PC-9 (cell line): ENCODE measurements at regions of chr15 and their contacts with region 1.

Region 1: DNA sequence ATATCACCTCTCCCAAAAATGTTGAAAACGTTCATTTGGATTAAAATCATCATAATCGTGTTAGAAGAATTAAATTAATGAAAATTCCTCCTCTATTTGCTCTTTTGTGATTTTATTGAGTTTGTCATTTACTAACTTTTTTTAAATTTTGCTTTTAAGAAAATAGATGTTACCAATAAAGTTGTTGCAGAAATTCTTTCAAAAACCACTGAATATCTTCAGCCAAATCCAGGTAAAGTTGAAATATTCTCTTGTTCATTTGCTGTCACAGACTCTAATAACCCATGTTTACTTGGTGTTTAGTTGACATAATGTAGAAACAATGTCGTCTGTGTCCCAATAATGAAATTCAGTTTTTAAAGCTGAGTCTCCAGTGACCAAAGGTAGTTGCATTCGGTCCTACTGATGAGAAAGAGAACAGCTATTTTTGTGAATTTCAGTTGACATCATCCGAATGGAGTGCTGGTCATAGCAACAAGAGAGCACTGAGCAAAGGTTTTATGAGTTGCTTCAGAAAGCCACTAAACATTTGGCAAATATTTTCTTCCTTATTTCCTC is 88.9 kb upstream of the ADAMTSL3 start:
- DNase-seq: peak in 1 of 2 experiments; percentile 37
- H3K4me3 ChIP-seq: no peak overlapping the region
- H3K27ac ChIP-seq: no peak overlapping the region
- H3K4me1 ChIP-seq: no peaks in the 10 kb centered on the region
- H3K27me3 ChIP-seq: no peaks in the 10 kb centered on the region
- CTCF ChIP-seq: no peak

Region 2: GRCh38 chr15:84023636-84024035 is 458.6 kb after region 1 on chr15:
- CTCF ChIA-PET with region 1: no interaction called
- POLR2A ChIA-PET with region 1: no interaction called
- intact Hi-C with region 1: loop called (anchors 2 kb)
- DNase-seq: peak in 1 of 2 experiments; percentile 6
- H3K4me3 ChIP-seq: no peak overlapping the region
- H3K27ac ChIP-seq: no peak overlapping the region
- H3K4me1 ChIP-seq: no peaks in the 10 kb centered on the region
- H3K27me3 ChIP-seq: no peaks in the 10 kb centered on the region
- CTCF ChIP-seq: peak; percentile 70